ENCODE measurements at regions of chr16 and their contacts with region 1.

Region 1: DNA sequence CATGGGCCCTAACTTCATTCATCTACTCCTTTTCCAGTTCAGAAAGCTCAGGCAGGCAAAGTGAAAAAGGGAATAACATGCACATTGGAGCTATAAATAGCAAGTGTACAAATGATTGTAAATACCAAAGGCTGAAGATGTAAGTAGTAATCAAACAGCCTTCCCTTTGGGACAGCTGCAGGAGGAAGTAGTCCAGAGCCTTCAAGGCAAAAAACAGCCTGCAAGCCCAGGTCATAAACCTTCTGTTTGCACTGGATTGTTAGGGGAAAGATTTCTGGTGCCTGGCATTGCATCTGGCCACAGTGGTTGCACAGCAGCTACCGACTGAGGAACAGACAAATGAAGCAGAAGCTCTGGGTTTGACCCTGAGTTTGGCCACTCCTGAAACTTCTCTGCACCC is 98.6 kb upstream of the PMFBP1 start:
- DNase-seq: no peak
- H3K4me3 Mint-ChIP-seq: no peak overlapping the region
- H3K27ac Mint-ChIP-seq: no peak overlapping the region
- H3K4me1 Mint-ChIP-seq: peaks cover 6% of the 10 kb centered on the region
- H3K27me3 Mint-ChIP-seq: no peaks in the 10 kb centered on the region
- CTCF ChIP-seq: no peak

Region 2: GRCh38 chr16:72285728-72286127 is 15.2 kb after region 1 on chr16:
- CTCF ChIA-PET with region 1: interaction called, 14 read pairs
- POLR2A ChIA-PET with region 1: no interaction called
- intact Hi-C with region 1: no loop called
- DNase-seq: peak; percentile 49
- H3K4me3 Mint-ChIP-seq: no peak overlapping the region
- H3K27ac Mint-ChIP-seq: no peak overlapping the region
- H3K4me1 Mint-ChIP-seq: peaks cover 37% of the 10 kb centered on the region
- H3K27me3 Mint-ChIP-seq: no peaks in the 10 kb centered on the region
- CTCF ChIP-seq: no peak

Measured in MCF 10A (cell line).